PC-3 (cell line): ENCODE measurements at regions of chr12 and their contacts with region 1.

Region 1: GRCh38 chr12:106136263-106136662 is 2.5 kb downstream of the NUAK1 start:
- DNase-seq: peak; percentile 95
- ATAC-seq: peak; percentile 27
- H3K4me3 ChIP-seq: peak overlapping the region; percentile 82
- H3K27ac ChIP-seq: peak overlapping the region; percentile 64
- H3K4me1 ChIP-seq: peaks cover 62% of the 10 kb centered on the region
- H3K27me3 ChIP-seq: no peaks in the 10 kb centered on the region
- CTCF ChIP-seq: peak; percentile 98

Region 2: GRCh38 chr12:105401198-105401597 is 735.1 kb before region 1 on chr12:
- CTCF ChIA-PET with region 1: no interaction called
- POLR2A ChIA-PET with region 1: interaction called, 6 read pairs
- intact Hi-C with region 1: loop called (anchors 5 kb)
- DNase-seq: peak; percentile 61
- ATAC-seq: peak; percentile 97
- H3K4me3 ChIP-seq: no peak overlapping the region
- H3K27ac ChIP-seq: peak overlapping the region; percentile 35
- H3K4me1 ChIP-seq: peaks cover 18% of the 10 kb centered on the region
- H3K27me3 ChIP-seq: no peaks in the 10 kb centered on the region
- CTCF ChIP-seq: no peak

Region 3: GRCh38 chr12:105451211-105451610 is 685.1 kb before region 1 on chr12:
- CTCF ChIA-PET with region 1: interaction called, 3 read pairs
- POLR2A ChIA-PET with region 1: no interaction called
- intact Hi-C with region 1: loop called (anchors 1 kb)
- DNase-seq: no peak
- ATAC-seq: no peak
- H3K4me3 ChIP-seq: no peak overlapping the region
- H3K27ac ChIP-seq: no peak overlapping the region
- H3K4me1 ChIP-seq: peaks cover 11% of the 10 kb centered on the region
- H3K27me3 ChIP-seq: no peaks in the 10 kb centered on the region
- CTCF ChIP-seq: no peak

Region 4: DNA sequence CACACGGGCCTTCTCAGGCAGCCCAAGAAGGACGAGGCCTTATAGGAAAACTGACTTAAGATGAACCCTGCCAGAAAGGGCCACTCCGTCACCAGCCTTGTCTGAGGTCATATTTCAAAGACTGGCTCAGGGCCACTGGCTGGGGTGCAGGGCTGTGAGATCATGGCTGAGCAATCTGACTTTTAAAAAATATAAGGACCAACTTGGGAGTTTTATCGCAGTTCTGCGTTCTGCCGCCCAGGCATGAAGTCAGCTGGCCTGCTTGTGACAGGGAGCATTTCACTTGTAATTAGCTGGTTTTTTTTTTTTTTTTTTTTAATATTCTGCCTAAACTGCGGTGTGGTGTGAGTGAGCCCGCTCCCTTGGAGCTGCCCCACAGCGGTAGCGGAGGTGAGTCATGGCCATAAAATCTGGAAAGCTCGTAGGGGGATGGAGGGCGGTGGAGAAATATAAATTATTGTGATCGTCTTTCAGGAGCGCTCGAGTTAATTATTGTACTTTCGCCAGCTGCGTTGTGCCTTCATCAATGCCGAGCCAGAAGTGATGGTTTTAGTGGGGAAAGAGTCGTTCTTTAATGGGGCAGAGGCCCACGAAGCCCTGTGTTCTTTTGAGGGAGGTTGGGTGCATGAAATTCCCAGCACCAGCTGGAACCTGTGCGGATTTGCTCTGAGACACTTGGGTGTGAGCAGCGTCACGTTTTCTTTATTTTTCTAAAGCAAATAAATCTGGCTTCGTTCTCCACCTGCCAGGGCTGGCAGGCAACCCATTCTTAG is 573.9 kb before region 1 on chr12:
- CTCF ChIA-PET with region 1: no interaction called
- POLR2A ChIA-PET with region 1: no interaction called
- intact Hi-C with region 1: loop called (anchors 5 kb)
- DNase-seq: peak; percentile 96
- ATAC-seq: peak; percentile 89
- H3K4me3 ChIP-seq: peak overlapping the region; percentile 60
- H3K27ac ChIP-seq: peak overlapping the region; percentile 87
- H3K4me1 ChIP-seq: peaks cover 21% of the 10 kb centered on the region
- H3K27me3 ChIP-seq: no peaks in the 10 kb centered on the region
- CTCF ChIP-seq: 0 out of 2 replicates have a peak, but pooled peaks have one; percentile 14

Region 5: GRCh38 chr12:105775343-105775742 is 360.9 kb before region 1 on chr12:
- CTCF ChIA-PET with region 1: no interaction called
- POLR2A ChIA-PET with region 1: no interaction called
- intact Hi-C with region 1: loop called (anchors 5 kb)
- DNase-seq: peak; percentile 54
- ATAC-seq: peak; percentile 60
- H3K4me3 ChIP-seq: no peak overlapping the region
- H3K27ac ChIP-seq: no peak overlapping the region
- H3K4me1 ChIP-seq: no peaks in the 10 kb centered on the region
- H3K27me3 ChIP-seq: no peaks in the 10 kb centered on the region
- CTCF ChIP-seq: peak; percentile 44; the same call in 1 of the 2 replicates

Region 6: DNA sequence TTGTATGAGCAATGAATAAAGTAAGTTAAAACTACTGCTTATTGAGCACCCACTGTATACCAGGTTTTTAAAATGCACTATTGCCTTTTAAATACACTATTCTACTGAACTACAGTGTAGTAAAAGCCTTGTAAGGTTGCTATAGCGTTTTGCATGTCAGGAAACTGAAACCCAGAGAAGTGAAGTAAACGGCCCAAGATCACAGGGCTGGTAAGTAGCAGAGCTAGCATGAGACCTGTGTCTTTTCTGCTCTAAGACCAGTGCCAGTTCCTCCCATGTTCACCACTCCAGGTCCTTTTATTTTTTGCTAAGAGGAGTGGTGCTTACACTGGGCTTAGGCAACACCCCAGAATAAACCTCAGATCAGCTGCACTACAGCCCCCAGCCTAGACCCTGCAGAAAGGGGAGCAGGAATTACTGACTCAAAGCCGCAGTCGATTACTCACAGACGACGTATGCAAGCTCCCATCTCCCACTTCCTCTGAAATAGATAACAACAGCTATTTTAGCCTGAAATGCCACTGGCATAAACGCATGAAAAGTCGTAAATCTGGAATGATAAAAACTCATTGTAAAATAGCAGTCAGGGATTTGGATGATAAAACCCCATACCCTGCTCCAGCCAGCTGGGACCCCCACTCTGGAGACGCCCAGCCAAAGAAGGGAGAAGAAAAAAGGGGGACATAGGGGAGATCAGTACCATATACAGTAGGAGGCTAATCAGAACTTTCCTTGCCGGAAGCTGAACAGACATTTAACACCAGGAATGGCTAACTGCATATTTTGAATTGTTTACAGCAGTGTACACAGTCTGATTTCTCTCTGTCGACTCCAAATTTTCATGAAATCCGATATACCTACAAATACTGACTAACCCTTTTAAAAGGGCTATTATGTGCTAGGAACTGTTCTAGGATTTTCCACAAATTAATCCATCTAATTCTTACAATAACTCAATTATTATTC is 105.8 kb before region 1 on chr12:
- CTCF ChIA-PET with region 1: interaction called, 6 read pairs
- POLR2A ChIA-PET with region 1: no interaction called
- intact Hi-C with region 1: loop called (anchors 2 kb)
- DNase-seq: peak; percentile 93
- ATAC-seq: peak; percentile 76
- H3K4me3 ChIP-seq: peak overlapping the region; percentile 49
- H3K27ac ChIP-seq: peak overlapping the region; percentile 87
- H3K4me1 ChIP-seq: peaks cover 43% of the 10 kb centered on the region
- H3K27me3 ChIP-seq: no peaks in the 10 kb centered on the region
- CTCF ChIP-seq: no peak